PC-9 (cell line): ENCODE measurements at regions of chr1 and their contacts with region 1.

Region 1: DNA sequence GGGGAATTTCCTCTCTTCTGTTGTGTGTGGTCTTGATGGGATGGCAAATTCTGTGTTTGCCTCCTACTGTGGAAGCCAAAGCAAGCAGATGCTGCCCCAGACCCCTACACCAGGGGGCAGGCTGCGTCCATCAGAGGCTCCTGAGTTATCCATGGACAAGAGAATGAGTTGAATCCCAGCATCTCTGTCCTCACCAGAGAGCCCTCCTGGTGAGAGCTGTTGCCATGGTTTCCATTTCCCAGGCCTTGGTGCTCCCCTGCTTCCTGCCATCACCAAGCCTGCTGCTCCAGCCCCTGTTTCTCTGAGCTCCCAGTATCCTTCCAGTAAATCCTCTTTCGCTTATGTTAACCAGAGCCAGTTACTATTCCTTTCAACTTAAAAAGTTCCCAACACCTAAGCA is 20.4 kb upstream of the GNG12 start:
- DNase-seq: peak; percentile 48 to 64
- H3K4me3 ChIP-seq: no peak overlapping the region
- H3K27ac ChIP-seq: no peak overlapping the region
- H3K4me1 ChIP-seq: peaks cover 11% of the 10 kb centered on the region
- H3K27me3 ChIP-seq: no peaks in the 10 kb centered on the region
- CTCF ChIP-seq: peak; percentile 93

Region 2: GRCh38 chr1:67791686-67792475 is 61.8 kb before region 1 on chr1:
- CTCF ChIA-PET with region 1: no interaction called
- POLR2A ChIA-PET with region 1: no interaction called
- intact Hi-C with region 1: no loop called
- DNase-seq: peak; percentile 60 to 89
- H3K4me3 ChIP-seq: no peak overlapping the region; the same call in 1 of the 2 replicates
- H3K27ac ChIP-seq: peak overlapping the region; percentile 84
- H3K4me1 ChIP-seq: peaks cover 45% of the 10 kb centered on the region
- H3K27me3 ChIP-seq: no peaks in the 10 kb centered on the region
- CTCF ChIP-seq: no peak

Region 3: DNA sequence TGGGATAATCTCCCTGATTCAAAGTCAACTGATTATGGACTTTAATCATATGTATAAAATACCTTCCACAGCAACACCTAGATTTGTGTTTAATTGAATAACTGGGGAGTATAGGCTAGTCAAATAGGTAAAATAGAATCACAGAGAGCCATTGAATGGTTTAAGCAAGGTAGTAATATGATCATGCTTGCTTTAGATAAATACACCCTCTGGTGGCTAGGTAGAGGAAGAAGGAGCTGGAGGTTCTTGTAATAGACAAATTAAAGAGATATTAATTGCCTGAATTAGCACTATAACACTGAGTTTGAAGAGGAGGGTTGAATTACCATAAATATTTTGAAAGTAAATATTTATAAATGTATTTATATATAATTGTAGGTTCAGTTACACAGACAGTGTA is 156.4 kb after region 1 on chr1:
- CTCF ChIA-PET with region 1: no interaction called
- POLR2A ChIA-PET with region 1: no interaction called
- intact Hi-C with region 1: loop called (anchors 1 kb)
- DNase-seq: no peak
- H3K4me3 ChIP-seq: no peak overlapping the region
- H3K27ac ChIP-seq: no peak overlapping the region
- H3K4me1 ChIP-seq: no peaks in the 10 kb centered on the region
- H3K27me3 ChIP-seq: peaks cover 6% of the 10 kb centered on the region; the same call in 1 of the 2 replicates
- CTCF ChIP-seq: peak; percentile 60

Region 4: GRCh38 chr1:68111519-68112436 is 258.1 kb after region 1 on chr1:
- CTCF ChIA-PET with region 1: interaction called, 4 read pairs
- POLR2A ChIA-PET with region 1: no interaction called
- intact Hi-C with region 1: loop called (anchors 1 kb)
- DNase-seq: peak; percentile 46 to 50
- H3K4me3 ChIP-seq: no peak overlapping the region
- H3K27ac ChIP-seq: no peak overlapping the region
- H3K4me1 ChIP-seq: no peaks in the 10 kb centered on the region
- H3K27me3 ChIP-seq: no peaks in the 10 kb centered on the region
- CTCF ChIP-seq: peak; percentile 73